A673 (cell line): ENCODE measurements at regions of chr1 and their contacts with region 1.

Region 1: GRCh38 chr1:75632350-75632949 is 21.5 kb upstream of the SLC44A5 start:
- DNase-seq: peak; percentile 54
- H3K4me3 ChIP-seq: no peak overlapping the region
- H3K27ac ChIP-seq: no peak overlapping the region
- H3K4me1 ChIP-seq: peaks cover 10% of the 10 kb centered on the region
- H3K27me3 ChIP-seq: no peaks in the 10 kb centered on the region
- CTCF ChIP-seq: peak; percentile 77

Region 2: GRCh38 chr1:75233302-75233929 is 399.0 kb before region 1 on chr1:
- CTCF ChIA-PET with region 1: no interaction called
- POLR2A ChIA-PET with region 1: no interaction called
- intact Hi-C with region 1: loop called (anchors 10 kb)
- DNase-seq: peak; percentile 24
- H3K4me3 ChIP-seq: no peak overlapping the region
- H3K27ac ChIP-seq: no peak overlapping the region
- H3K4me1 ChIP-seq: no peaks in the 10 kb centered on the region
- H3K27me3 ChIP-seq: peaks cover 2% of the 10 kb centered on the region
- CTCF ChIP-seq: peak; percentile 76